Activated CD4-positive, alpha-beta T cell treated with anti-CD3 and anti-CD28 coated beads, Interleukin-2, amount 10 ng/mL, durations not matched to agents 7 days and 5 days (primary cell): ENCODE measurements at regions of chr10 and their contacts with region 1.

Region 1: GRCh38 chr10:86970162-86970981 is 2.1 kb downstream of the ADIRF start:
- DNase-seq: no peak
- H3K4me3 Mint-ChIP-seq: peak overlapping the region; percentile 67
- H3K27ac Mint-ChIP-seq: peak overlapping the region; percentile 87
- H3K4me1 Mint-ChIP-seq: peaks cover 29% of the 10 kb centered on the region
- H3K27me3 Mint-ChIP-seq: peaks cover 28% of the 10 kb centered on the region

Region 2: DNA sequence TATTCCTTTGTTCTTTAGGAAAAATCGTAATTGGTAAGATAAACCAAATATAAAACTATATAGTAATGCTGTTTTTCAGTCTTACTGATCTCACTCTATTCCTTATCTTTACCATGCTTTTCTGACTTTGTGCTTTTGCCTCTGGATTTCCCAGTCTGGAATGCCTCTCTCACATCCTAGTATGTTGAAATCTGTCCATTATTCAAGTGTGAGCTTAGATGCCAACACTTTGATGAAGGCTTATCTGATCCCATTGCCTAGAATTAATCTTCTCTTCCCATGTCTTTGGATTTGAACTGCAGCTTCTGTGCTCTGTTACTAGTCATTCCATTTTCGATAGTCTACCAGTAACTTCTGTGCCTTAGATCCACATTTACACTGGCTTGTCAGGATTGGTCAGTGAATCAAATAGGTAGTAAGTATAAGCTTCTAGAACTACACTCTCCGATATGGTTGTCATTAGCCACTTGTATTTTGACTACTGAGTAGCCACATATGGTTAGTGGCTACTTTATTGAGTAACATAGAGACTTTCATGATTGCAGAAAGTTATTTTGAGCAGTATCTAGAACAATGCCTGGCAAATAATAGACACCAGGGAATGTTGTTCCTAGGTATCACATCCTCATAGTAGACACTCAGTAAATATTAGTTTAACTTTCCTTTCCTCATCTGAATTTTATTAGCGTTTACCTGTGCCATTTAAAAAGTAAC is 121.0 kb before region 1 on chr10:
- CTCF ChIA-PET with region 1: no interaction called
- POLR2A ChIA-PET with region 1: no interaction called
- DNase-seq: no peak
- H3K4me3 Mint-ChIP-seq: no peak overlapping the region
- H3K27ac Mint-ChIP-seq: no peak overlapping the region
- H3K4me1 Mint-ChIP-seq: no peaks in the 10 kb centered on the region
- H3K27me3 Mint-ChIP-seq: no peaks in the 10 kb centered on the region

Region 3: GRCh38 chr10:86936661-86937501 is 33.5 kb before region 1 on chr10:
- CTCF ChIA-PET with region 1: interaction called, 12 read pairs
- POLR2A ChIA-PET with region 1: no interaction called
- DNase-seq: no peak
- H3K4me3 Mint-ChIP-seq: no peak overlapping the region
- H3K27ac Mint-ChIP-seq: no peak overlapping the region
- H3K4me1 Mint-ChIP-seq: peaks cover 1% of the 10 kb centered on the region
- H3K27me3 Mint-ChIP-seq: peaks cover 1% of the 10 kb centered on the region

Region 4: DNA sequence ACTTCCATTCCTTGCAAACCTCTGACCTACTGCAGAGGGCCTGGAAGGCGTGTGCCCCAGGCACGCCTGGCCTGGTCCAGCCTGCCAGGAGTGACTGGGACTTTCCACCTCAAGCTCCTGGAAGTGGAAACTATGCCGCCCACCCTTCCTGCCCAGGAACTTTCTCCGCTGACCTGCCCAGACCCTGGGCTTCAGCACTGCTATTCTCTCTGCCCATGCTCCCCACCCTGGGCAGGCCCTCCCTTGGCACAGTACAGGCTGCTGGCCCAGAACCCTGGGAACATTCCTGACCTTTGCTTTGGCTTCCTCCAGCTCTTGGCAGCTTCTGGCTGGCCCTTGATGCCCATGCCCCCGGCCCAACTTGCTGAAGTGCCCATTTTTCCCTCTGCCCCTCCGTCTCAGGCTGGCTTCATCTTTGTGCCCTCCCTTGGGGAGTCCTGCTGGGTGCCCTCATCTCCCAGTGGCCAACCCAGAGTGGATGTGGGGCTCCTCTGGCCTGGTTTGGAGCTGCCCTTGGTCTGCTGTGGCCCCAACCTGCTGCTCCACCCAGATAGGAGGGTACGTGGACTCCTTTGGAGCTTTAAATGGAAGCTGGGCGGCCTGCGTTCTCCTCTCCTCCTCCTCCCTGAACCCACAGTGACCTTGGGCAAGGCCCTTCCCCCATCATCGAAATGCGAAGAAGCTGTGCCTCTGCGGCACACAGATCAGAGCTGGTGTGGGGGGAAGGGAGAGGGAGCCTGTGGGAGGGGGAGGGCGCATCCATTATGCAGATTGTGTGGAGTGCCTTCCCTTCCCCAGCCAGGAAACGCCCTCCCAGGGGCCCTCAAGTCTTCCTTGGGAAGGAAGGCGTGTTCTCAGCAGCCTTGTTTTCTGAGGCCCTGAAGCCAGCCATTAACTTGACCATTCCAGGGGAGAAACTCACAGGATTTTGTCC is 16.4 kb before region 1 on chr10:
- CTCF ChIA-PET with region 1: interaction called, 23 read pairs
- POLR2A ChIA-PET with region 1: no interaction called
- DNase-seq: no peak
- H3K4me3 Mint-ChIP-seq: no peak overlapping the region
- H3K27ac Mint-ChIP-seq: no peak overlapping the region
- H3K4me1 Mint-ChIP-seq: peaks cover 6% of the 10 kb centered on the region
- H3K27me3 Mint-ChIP-seq: no peaks in the 10 kb centered on the region

Region 5: GRCh38 chr10:86960003-86960862 is 10.1 kb before region 1 on chr10:
- CTCF ChIA-PET with region 1: interaction called, 23 read pairs
- POLR2A ChIA-PET with region 1: no interaction called
- DNase-seq: peak; percentile 42
- H3K4me3 Mint-ChIP-seq: no peak overlapping the region
- H3K27ac Mint-ChIP-seq: no peak overlapping the region
- H3K4me1 Mint-ChIP-seq: peaks cover 3% of the 10 kb centered on the region
- H3K27me3 Mint-ChIP-seq: no peaks in the 10 kb centered on the region

Region 6: DNA sequence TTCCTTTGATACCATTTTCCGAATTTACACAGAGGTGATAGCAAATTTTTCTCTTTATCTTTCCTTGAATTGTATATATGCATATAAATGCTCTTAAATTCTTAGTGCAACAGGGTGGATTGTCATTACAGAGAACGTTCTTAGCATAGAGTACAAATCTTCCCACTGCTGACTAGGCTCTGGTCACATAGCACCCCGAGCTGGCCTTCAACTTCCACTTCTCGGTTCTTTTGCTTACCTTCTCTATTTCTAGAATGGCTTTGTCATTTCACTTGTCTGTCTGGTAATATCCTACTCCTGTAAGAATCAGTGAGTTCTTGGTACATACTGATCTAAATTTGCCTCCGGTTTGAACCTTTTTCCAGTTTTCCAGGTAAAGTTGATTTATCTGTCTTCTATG is 11.3 kb after region 1 on chr10:
- CTCF ChIA-PET with region 1: no interaction called
- POLR2A ChIA-PET with region 1: no interaction called
- DNase-seq: no peak
- H3K4me3 Mint-ChIP-seq: no peak overlapping the region
- H3K27ac Mint-ChIP-seq: no peak overlapping the region
- H3K4me1 Mint-ChIP-seq: no peaks in the 10 kb centered on the region
- H3K27me3 Mint-ChIP-seq: peaks cover 14% of the 10 kb centered on the region